BJ (cell line): ENCODE measurements at regions of chr2 and their contacts with region 1.

Region 1: GRCh38 chr2:46857893-46858701 is 57.5 kb downstream of the MCFD2 start:
- DNase-seq: peak; percentile 97
- H3K4me3 ChIP-seq: no peak overlapping the region
- H3K27me3 ChIP-seq: no peaks in the 10 kb centered on the region
- CTCF ChIP-seq: peak; percentile 22; the same call in 1 of the 2 replicates

Region 2: DNA sequence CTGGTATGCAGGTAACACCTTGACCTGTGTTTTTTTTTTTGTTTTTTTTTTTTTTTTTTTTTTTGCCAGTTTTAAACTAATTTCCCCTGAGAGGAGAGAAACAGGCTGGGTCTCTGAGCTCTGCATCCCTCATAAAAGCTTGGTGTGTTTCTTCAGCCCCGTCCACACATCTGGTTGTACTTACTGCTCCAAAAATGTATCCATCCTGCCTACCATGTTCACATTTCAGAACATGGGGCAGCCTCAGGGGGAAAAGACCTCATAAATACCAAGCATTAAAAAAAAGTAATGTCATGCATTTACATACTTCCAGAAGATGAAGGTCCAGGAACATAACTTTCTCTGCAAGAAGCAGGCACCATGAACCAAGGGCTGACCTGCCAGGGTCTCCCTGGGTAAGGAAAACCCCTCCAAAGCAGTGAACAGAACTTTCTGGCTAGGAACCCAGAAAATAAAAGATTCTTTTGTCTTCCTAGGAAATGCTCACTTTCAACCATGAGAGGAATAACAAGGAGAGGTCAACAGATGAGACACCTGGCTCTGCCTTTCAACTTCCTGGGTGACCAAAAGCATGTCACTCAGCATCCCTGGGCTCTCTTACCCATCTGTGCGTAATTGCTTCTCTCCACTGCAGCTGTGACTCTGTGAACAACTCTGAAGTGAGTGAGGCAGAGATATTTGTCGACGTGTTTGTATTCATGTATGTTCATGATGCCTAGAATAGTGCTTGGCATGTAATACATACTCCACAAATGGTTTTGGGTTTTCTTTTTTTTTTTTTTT is 61.1 kb before region 1 on chr2:
- CTCF ChIA-PET with region 1: no interaction called
- POLR2A ChIA-PET with region 1: interaction called, 23 read pairs
- DNase-seq: peak; percentile 84
- H3K4me3 ChIP-seq: no peak overlapping the region
- H3K27me3 ChIP-seq: no peaks in the 10 kb centered on the region
- CTCF ChIP-seq: no peak

Region 3: DNA sequence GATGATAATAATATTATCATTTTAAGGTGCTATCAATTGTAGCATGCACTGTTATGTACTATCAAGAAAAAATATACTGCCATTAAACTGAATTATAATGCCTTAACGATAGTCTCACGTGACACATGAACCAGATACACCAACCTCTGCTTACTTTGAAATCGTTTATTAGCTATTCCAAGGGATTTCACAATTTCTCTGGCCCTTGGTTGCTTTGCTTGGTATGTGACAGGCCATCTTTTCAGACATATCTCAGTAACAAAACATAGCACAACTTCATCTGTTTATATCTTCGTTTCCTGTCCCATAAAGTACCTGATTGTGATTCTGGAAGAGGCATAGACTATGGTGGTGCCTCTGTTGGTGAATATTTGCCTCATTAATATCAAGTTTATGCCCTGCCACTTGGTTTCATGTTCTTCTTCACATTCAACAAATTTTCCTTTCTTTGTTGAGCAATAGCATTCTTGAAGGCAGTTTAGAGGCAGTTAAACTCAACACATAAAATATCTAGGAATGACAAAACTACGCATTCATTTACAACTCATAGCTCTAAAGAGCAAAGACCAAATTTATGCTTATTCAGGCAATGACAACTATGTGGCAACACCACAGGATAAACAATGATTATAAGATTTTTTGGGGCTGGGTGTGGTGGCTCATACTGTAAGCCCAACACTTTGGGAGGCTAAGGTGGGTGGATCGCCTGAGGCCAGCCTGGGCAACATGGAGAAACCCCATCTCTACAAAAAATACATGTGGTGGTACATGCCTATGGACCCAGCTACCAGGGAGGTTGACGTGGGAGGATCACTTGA is 26.8 kb before region 1 on chr2:
- CTCF ChIA-PET with region 1: interaction called, 3 read pairs
- POLR2A ChIA-PET with region 1: interaction called, 16 read pairs
- DNase-seq: peak; percentile 95
- H3K4me3 ChIP-seq: no peak overlapping the region
- H3K27me3 ChIP-seq: no peaks in the 10 kb centered on the region
- CTCF ChIP-seq: no peak

Region 4: DNA sequence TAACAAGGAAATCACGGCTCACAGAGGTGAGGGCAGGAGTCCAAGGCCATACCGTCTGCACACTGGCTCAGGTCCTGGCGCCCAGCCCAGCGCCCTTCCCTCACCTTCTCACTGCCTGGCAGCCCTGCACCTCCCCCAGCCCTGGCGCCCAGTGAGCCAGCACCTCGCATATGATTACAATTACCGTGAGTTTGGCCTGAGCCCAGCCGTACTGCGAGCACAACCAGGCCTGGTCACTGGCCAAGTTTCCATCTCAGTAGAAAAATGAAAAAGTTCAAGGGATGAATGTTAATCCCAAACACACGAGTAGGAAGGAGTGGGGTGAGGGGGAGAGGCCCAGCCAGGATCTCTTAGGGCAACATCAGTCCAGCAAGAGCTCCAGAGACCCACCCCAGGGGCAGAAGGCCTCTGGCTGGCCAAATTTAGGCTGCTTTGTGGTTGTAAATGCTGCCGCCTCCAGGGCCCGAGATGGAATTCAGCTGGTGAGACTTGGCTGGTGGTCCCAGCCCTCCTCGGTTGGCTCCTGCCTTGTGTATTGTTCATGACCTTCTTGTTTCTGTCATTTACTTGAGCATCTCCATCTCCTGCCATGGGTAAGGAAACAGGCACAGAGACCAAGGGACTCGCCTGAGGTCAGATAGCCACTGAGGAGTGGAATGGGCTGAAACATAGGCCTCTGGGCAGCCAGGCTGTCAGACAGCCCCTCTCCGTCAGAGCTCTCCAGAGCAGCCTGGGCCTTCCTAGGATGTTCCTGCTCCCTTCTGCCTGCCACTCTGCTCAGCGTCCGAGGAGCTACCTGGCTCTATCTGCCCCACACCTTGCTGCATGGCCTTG is 10.6 kb before region 1 on chr2:
- CTCF ChIA-PET with region 1: interaction called, 5 read pairs
- POLR2A ChIA-PET with region 1: interaction called, 10 read pairs
- DNase-seq: peak; percentile 85
- H3K4me3 ChIP-seq: no peak overlapping the region
- H3K27me3 ChIP-seq: no peaks in the 10 kb centered on the region
- CTCF ChIP-seq: 0 out of 2 replicates have a peak, but pooled peaks have one; percentile 2

Region 5: GRCh38 chr2:46874033-46874929 is 16.2 kb after region 1 on chr2:
- CTCF ChIA-PET with region 1: interaction called, 5 read pairs
- POLR2A ChIA-PET with region 1: interaction called, 10 read pairs
- DNase-seq: peak; percentile 68
- H3K4me3 ChIP-seq: no peak overlapping the region
- H3K27me3 ChIP-seq: no peaks in the 10 kb centered on the region
- CTCF ChIP-seq: no peak